Activated CD4-positive, alpha-beta T cell treated with anti-CD3 and anti-CD28 coated beads for 36 hours (primary cell): ENCODE measurements at regions of chr12 and their contacts with region 1.

Region 1: DNA sequence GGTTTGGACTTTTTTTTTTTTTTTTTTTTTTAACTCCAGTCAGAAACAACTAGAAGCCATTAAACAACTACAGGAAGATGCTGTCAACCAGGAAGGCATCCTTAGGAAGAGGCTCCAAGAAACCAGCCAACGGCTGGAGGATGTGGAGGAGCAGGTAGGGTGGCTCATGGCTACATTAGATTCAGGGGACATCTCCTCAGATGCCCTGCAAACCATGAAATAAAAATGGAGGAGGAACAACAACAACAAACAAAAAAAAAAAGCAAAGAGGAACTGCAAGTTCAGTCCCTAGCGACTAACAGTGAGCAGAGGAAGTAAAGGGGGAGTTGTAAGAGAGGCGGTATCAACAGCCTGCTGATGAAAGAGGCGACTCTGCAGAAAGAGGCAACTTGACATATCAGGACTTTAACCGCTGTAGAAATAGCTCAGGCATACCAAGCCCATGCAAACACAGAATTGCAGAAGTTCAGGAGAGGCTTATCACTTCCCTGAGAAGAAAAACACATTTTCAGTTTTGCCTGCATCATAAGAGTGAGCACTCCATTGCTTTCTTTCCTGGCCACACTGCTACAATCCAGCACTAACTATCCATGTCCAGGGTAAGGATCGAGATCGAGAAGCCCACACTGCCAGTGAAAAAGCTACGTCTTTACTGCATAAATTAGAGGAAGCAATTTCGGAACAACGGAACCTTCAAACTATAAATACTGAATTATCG is 103.5 kb upstream of the BCAT1 start:
- DNase-seq: peak; percentile 56
- ATAC-seq: peak; percentile 69
- H3K4me3 Mint-ChIP-seq: peak overlapping the region; percentile 97
- H3K27ac Mint-ChIP-seq: peak overlapping the region; percentile 98
- H3K4me1 Mint-ChIP-seq: peaks cover 42% of the 10 kb centered on the region
- H3K27me3 Mint-ChIP-seq: no peaks in the 10 kb centered on the region

Region 2: GRCh38 chr12:24902511-24903328 is 149.6 kb before region 1 on chr12:
- CTCF ChIA-PET with region 1: interaction called, 3 read pairs
- POLR2A ChIA-PET with region 1: no interaction called
- intact Hi-C with region 1: loop called (anchors 1 to 5 kb)
- DNase-seq: peak; percentile 63
- ATAC-seq: peak; percentile 28
- H3K4me3 Mint-ChIP-seq: peak overlapping the region; percentile 88
- H3K27ac Mint-ChIP-seq: peak overlapping the region; percentile 95
- H3K4me1 Mint-ChIP-seq: peaks cover 50% of the 10 kb centered on the region
- H3K27me3 Mint-ChIP-seq: peaks cover 28% of the 10 kb centered on the region

Region 3: DNA sequence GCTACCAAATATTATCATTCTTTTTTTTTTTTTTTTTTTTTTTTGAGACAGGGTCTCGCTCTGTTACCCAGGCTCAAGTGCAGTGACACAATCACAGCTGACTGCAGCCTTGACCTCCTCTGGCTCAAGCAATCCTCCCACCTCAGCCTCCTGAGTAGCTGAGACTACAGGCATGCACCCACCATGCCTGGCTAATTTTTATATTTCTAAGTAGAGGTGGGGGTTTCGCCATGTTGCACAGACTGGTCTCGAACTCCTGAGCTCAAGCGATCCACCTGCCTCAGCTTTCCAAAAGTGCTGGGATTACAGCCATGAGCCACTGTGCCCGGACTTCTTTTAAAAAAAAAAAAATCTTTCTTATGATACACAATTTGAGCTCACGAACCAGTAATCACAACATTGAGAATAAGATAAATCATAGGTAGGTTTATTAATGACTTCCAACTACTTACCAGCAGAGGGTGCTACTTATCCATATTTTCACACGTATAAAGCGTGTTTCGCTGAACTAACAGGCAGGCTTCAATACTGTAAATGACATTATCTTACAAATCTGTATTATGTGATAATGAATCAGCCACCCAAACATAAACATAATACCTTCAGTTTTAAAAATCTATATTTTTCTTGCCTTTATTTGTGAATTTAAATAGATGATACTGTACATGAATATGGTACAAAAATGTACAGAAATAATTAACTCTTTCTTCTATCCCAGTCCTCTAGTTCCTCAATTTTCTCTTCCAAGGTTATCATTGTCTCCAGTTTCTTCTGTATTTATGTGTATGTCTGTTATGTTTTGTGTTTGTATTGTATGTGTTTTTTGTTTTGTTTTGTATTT is 60.9 kb before region 1 on chr12:
- CTCF ChIA-PET with region 1: interaction called, 6 read pairs
- POLR2A ChIA-PET with region 1: no interaction called
- intact Hi-C with region 1: loop called in 1 of 2 experiments (anchors 5 kb)
- DNase-seq: no peak
- ATAC-seq: peak; percentile 85
- H3K4me3 Mint-ChIP-seq: no peak overlapping the region
- H3K27ac Mint-ChIP-seq: no peak overlapping the region
- H3K4me1 Mint-ChIP-seq: no peaks in the 10 kb centered on the region
- H3K27me3 Mint-ChIP-seq: no peaks in the 10 kb centered on the region

Region 4: GRCh38 chr12:25241167-25242020 is 189.0 kb after region 1 on chr12:
- CTCF ChIA-PET with region 1: no interaction called
- POLR2A ChIA-PET with region 1: no interaction called
- intact Hi-C with region 1: loop called in 1 of 2 experiments (anchors 5 kb)
- DNase-seq: no peak
- ATAC-seq: peak; percentile 49
- H3K4me3 Mint-ChIP-seq: no peak overlapping the region
- H3K27ac Mint-ChIP-seq: peak overlapping the region; percentile 3
- H3K4me1 Mint-ChIP-seq: peaks cover 31% of the 10 kb centered on the region
- H3K27me3 Mint-ChIP-seq: no peaks in the 10 kb centered on the region

Region 5: GRCh38 chr12:25386831-25387731 is 334.7 kb after region 1 on chr12:
- CTCF ChIA-PET with region 1: interaction called, 4 read pairs
- POLR2A ChIA-PET with region 1: no interaction called
- intact Hi-C with region 1: loop called in 1 of 2 experiments (anchors 1 kb)
- DNase-seq: peak; percentile 83
- ATAC-seq: peak; percentile 17
- H3K4me3 Mint-ChIP-seq: peak overlapping the region; percentile 97
- H3K27ac Mint-ChIP-seq: peak overlapping the region; percentile 100
- H3K4me1 Mint-ChIP-seq: peaks cover 53% of the 10 kb centered on the region
- H3K27me3 Mint-ChIP-seq: peaks cover 12% of the 10 kb centered on the region

Region 6: GRCh38 chr12:26937875-26938700 is 1885.7 kb after region 1 on chr12 and contains the starts of genes FGFR1OP2 and INTS13:
- CTCF ChIA-PET with region 1: no interaction called
- POLR2A ChIA-PET with region 1: no interaction called
- intact Hi-C with region 1: loop called in 1 of 2 experiments (anchors 5 kb)
- DNase-seq: peak; percentile 99
- ATAC-seq: peak; percentile 92
- H3K4me3 Mint-ChIP-seq: peak within 1 kb of the TSS; percentile 98
- H3K27ac Mint-ChIP-seq: peak within 1 kb of the TSS; percentile 99
- H3K4me1 Mint-ChIP-seq: peaks cover 56% of the 10 kb centered on the region
- H3K27me3 Mint-ChIP-seq: no peaks in the 10 kb centered on the region
- total RNA-seq, gene FGFR1OP2: 38.5 to 43.1 TPM
- total RNA-seq, gene INTS13: 66.3 to 71.5 TPM